Right ventricle myocardium inferior (tissue), 1 donor: ENCODE measurements at regions of chrX and their contacts with region 1.

Region 1: GRCh38 chrX:15594371-15594770 is 6.4 kb downstream of the ACE2 start:
- DNase-seq: no peak
- ATAC-seq: no peak

Region 2: DNA sequence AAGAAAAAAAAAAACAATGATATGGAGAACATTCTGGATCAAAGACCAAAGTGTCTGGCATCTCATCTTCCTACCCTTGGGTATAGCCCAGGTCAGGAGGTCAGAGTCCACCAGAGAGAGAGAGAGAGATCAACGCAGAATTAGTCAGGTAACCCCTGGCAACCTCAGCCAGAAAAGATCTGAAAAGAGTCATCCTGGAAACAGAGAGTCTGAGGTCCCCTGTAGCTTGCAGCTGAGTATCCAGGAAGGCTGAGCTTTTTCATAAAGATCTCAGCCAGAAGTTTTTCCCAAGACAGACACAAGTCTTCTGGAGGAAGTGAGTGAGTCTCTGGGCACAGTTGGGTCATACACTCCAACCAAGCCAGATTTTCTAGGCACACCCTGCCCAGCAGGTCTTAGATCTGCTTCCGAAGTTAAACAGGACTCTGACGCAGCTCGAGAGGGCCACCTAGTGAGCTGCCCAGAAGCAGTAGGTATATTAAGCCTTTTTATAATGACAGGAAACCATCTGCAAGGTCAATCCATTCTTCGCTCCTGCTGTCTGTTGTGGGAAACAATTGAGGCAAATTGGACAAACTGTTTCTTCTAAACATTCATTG is 29.3 kb before region 1 on chrX:
- intact Hi-C with region 1: no loop called
- DNase-seq: peak; percentile 52
- ATAC-seq: peak; percentile 91

Region 3: DNA sequence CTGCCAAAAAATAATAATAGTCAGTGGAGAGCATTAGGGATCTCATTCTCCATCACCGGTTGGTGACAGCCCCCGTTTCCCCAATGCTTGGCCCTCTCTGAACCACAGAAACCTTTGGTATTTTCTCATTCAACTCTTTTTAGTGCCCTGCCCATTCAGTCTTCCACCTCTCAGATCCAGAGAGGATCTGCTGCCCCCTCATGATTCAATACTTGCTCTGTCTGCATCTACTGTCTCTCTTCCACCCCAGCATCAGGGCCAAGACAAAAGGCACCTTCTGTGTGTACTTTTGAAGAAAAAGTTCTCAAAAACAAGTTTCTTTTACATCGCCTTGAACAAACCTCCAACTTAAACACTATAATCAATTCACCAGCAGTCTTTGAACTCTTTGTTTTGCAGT is 50.9 kb after region 1 on chrX:
- intact Hi-C with region 1: loop called (anchors 10 kb)
- DNase-seq: no peak
- ATAC-seq: no peak

Region 4: DNA sequence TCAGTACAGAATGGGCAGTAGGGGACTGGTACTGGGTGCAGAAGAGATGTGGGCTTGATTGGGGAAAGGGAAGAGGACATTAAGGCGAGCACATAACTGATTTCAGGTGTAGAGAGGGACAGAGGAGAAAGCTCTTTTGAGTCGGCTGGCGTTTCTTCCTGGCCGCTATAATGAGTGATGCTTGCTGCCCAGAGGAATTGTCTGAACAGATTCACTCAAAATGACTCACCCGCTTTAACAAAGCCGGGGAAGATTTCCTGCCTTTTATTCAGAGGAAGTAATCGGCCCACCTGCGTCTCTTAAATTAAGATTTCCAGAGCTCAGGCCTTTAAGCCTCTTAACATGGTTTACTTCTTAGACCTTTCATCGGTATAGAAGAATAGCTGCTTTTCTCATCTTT is 362.3 kb after region 1 on chrX:
- intact Hi-C with region 1: no loop called
- DNase-seq: no peak
- ATAC-seq: no peak